Right ventricle myocardium superior (tissue), 1 donor: ENCODE measurements at regions of chr12 and their contacts with region 1.

Region 1: DNA sequence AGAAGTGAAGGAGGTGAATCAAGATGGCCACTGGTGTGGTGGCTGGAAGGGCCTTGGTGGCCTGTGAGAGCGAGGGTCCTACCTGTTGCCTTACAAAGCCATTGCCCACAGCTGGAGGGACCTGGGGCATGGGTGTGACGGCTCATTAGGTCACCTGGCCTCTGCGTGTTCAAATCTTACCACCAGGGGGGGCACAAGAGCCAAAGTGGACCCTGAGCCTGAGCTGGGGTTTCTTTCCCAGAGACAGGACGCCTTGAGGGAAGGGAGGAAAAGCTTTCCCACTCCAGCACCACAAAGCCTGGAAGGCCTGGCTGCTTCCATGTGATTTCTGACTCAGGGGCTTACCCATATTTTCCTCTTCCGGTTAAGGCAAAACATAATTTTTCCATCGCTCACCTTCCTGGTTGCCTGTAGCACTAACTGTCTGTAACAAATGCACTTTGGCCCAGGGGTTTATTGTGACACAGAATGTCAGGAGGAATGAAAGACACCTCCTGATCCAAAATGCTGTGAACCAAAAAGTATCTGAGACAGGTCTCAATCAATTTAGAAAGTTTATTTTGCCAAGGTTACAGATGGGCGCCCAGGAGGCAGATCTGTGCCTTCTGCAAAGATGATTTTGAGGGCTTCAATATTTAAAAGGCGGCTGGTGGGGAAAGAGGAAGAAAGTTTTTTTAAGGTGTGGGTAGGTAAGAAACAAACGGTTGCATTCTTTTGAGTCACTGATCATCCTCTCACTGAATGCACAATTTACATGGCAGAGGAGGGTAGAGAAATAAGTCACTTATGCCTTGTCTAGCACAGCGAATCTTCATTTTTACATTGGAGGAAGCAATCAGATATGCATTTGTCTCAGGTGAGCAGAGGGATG is 4.3 kb upstream of the CD9 start:
- DNase-seq: peak; percentile 88
- ATAC-seq: peak; percentile 88

Region 2: DNA sequence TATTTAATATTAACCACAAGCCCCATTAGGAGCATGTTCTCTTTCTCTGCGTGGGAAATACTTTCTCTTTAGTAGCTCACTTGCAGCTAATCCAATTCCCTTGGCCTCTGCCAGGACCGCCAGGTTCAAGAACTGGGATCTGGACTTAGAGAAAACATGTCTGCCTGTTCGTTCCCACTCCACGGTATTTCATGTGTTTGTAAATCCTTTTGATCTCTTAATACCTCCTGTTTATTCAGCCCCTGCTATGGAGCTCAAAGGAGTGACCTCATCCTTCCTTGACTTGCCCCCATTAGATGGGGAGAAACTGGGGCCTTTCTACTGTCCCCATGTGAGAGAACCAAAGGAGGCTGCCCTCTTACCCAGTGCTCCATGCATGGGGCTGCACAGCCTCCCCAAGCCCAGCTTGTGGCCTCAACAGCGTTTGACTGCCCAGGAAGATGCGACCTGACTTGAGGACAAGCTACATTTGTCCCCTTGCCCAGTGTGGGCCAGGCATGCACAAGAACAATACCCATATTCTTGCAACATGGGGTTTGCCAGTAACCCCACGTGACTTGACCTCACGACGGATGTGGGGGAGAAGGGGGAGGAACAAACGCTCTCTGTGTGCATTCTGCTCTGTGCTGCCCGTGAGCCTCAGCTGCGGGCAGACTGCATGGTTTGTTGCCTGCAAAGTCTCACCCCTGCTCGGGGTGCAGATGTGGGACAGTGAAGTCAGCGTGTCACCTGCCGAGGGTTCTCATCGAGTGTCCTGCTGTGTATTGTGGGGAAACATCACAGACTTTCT is 34.6 kb after region 1 on chr12:
- intact Hi-C with region 1: loop called (anchors 5 kb)
- DNase-seq: peak; percentile 66
- ATAC-seq: no peak

Region 3: GRCh38 chr12:6263931-6264330 is 68.0 kb after region 1 on chr12:
- intact Hi-C with region 1: no loop called
- DNase-seq: no peak
- ATAC-seq: no peak

Region 4: DNA sequence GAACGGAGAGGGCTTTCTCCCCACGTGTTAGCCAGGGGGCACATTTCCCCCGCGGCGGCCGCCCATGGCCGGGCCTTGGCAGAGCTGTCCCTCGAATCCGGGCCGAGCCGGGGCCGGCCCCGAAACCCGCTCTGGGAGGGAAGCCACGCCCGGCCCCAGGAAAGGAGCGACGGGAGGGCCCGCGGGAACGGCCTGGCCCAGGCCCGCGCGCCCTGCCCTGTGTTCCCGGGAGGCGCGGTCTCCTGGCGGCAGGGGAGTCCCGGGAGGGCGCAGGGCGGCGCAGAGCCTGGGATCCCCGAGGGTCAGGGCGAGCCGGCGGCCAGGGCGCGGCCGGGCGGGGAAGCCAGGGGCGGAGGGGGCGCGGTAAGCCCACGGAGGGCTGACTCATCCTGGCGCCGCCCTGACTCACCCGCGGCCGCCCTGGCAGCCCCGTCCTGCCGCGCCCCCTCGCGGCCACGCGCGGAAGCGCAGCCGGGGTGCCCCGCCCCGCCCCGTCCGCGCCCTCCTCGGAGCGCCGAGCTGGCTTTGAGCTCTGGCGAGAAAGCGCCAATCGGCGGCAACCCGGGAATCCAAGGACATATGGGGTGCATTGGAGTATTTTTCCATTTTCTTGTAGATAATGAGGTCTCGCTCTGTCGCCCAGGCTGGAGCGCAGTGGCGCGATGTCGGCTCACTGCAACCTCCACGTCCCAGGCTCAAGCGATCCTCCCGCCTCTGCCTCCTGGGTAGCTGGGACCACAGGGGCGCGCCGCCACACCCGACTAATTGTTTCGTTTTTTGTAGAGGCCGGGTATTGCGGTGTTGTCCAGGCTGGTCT is 82.7 kb after region 1 on chr12:
- intact Hi-C with region 1: loop called (anchors 2 kb)
- DNase-seq: peak; percentile 90
- ATAC-seq: peak; percentile 96